Activated CD4-positive, alpha-beta T cell treated with anti-CD3 and anti-CD28 coated beads for 36 hours (primary cell): ENCODE measurements at regions of chr5 and their contacts with region 1.

Region 1: DNA sequence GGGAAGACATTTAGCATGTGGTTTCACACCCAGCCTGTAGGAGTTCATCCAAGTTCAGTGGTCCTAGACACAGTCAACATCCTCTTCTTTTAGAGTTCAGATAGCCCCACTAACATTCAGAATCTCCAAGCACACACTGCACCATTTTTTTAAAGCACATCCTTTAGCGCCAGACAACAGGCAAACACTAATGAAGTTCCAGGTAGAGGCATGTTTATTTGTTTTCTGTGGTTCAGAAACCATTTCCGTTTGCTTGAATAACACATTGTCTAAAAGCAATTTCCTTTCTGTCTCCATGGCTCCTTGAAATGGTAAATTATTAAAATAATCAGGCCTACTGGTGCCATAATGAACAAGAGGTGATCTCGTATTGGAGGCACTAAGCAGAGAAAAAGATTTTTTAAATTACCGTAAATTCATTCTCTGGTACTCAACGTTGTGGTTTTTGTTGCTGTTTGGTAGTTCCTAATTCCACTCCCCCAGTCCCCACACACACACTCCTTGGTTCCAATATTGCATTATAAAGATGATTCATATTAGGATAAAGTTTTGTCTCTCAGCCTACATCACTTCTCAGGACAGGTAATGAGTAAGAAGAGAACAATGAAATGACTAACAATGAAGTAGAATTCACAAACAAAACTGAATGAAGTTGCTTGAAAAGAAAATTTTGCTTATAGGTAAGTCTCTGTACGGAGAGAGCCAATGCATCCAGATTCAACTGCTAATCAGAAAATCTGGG is 153.1 kb downstream of the PCSK1 start:
- DNase-seq: peak; percentile 48
- ATAC-seq: peak; percentile 96
- H3K4me3 Mint-ChIP-seq: no peak overlapping the region
- H3K27ac Mint-ChIP-seq: peak overlapping the region; percentile 35
- H3K4me1 Mint-ChIP-seq: peaks cover 23% of the 10 kb centered on the region
- H3K27me3 Mint-ChIP-seq: peaks cover 30% of the 10 kb centered on the region

Region 2: GRCh38 chr5:96067894-96068614 is 211.9 kb before region 1 on chr5:
- CTCF ChIA-PET with region 1: no interaction called
- POLR2A ChIA-PET with region 1: no interaction called
- intact Hi-C with region 1: loop called in 1 of 2 experiments (anchors 5 kb)
- DNase-seq: peak; percentile 36
- ATAC-seq: peak; percentile 62
- H3K4me3 Mint-ChIP-seq: no peak overlapping the region
- H3K27ac Mint-ChIP-seq: peak overlapping the region; percentile 87
- H3K4me1 Mint-ChIP-seq: peaks cover 52% of the 10 kb centered on the region
- H3K27me3 Mint-ChIP-seq: no peaks in the 10 kb centered on the region

Region 3: DNA sequence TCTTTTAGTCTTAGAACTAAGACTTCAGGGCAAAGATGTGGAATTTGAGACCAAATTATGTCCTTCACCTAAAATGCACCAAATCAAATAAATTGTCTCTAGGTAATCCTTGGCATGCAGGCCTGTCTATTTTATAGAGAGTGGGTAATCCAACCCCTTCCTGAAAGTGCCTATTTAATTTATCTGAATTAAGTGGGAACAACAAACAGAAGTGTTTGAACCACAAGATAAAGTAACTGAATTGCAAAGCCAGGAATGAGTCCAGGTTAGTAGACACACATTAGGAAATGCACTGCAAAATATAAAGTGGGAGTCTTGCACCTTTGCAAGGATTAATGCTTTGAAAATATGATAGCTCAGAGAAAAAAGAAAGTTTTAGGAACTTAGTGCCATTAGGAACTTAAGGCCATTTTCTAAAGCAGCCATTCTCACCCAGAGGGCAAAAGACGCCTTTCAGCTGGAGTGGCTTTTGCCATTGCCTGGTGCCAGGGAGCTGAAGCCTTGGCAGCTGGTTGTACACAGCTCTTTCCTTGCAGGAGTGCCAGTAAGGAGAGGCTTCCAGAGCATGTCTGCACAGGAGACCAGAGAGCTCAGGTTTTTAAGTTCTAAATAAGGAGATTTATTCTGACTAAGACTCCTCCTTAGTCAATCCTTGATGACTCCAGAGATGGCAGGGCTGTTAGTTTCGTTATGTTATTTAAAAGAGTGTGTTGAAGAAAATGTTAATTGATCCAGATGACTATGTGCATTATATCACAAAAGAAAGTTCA is 166.6 kb before region 1 on chr5:
- CTCF ChIA-PET with region 1: no interaction called
- POLR2A ChIA-PET with region 1: no interaction called
- intact Hi-C with region 1: loop called (anchors 1 to 5 kb)
- DNase-seq: no peak
- ATAC-seq: peak; percentile 71
- H3K4me3 Mint-ChIP-seq: no peak overlapping the region
- H3K27ac Mint-ChIP-seq: peak overlapping the region; percentile 84
- H3K4me1 Mint-ChIP-seq: peaks cover 35% of the 10 kb centered on the region
- H3K27me3 Mint-ChIP-seq: peaks cover 3% of the 10 kb centered on the region

Region 4: DNA sequence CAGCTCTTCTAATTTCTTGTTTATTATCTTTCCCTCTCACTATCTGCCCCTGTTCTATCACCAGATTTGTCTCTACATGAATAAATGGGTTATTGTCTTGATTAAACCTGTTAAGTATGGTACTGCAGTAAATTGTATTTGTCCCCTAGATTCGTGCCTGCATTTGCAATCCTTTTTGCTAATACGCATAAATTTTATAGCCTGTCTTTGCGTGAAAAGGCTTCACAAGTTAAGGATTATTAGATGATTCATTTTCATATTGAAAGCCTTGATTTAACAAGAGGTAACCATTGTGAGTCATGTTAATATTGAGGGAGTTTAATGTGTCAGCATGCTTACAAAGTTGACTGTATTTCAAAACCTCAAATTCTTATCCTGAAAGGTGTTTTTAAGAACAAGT is 51.6 kb before region 1 on chr5:
- CTCF ChIA-PET with region 1: no interaction called
- POLR2A ChIA-PET with region 1: no interaction called
- intact Hi-C with region 1: loop called (anchors 2 kb)
- DNase-seq: no peak
- ATAC-seq: no peak
- H3K4me3 Mint-ChIP-seq: no peak overlapping the region
- H3K27ac Mint-ChIP-seq: no peak overlapping the region
- H3K4me1 Mint-ChIP-seq: peaks cover 7% of the 10 kb centered on the region
- H3K27me3 Mint-ChIP-seq: peaks cover 26% of the 10 kb centered on the region

Region 5: GRCh38 chr5:96536991-96537785 is 257.2 kb after region 1 on chr5:
- CTCF ChIA-PET with region 1: no interaction called
- POLR2A ChIA-PET with region 1: no interaction called
- intact Hi-C with region 1: loop called in 1 of 2 experiments (anchors 2 kb)
- DNase-seq: no peak
- ATAC-seq: peak; percentile 86
- H3K4me3 Mint-ChIP-seq: peak overlapping the region; percentile 1
- H3K27ac Mint-ChIP-seq: peak overlapping the region; percentile 82
- H3K4me1 Mint-ChIP-seq: peaks cover 32% of the 10 kb centered on the region
- H3K27me3 Mint-ChIP-seq: no peaks in the 10 kb centered on the region